ENCODE measurements at regions of chr2 and their contacts with region 1.

Region 1: DNA sequence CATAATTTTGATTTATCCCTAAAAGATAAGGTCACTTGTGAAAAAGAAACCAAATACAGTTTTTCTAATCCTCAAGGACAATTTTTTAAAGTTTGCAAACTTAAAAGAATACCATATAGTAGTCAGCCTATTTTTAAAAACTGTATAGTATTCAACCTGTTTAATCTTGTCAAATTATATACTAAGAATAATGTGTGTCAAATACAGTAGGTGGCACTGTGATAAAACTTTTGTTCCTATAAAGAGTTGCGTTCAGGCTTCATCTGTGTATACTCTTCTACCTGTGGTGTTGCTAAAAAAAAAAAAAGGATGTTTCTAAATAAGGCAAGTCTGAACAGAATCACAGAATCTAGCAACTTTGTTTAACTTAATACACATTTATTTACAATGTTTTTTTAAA is 68.6 kb downstream of the CCDC138 start:
- DNase-seq: peak; percentile 56
- ATAC-seq: peak; percentile 88
- H3K4me3 ChIP-seq: no peak overlapping the region
- H3K27ac ChIP-seq: no peak overlapping the region
- H3K4me1 ChIP-seq: no peaks in the 10 kb centered on the region
- H3K27me3 ChIP-seq: no peaks in the 10 kb centered on the region
- CTCF ChIP-seq: peak; percentile 71

Region 2: GRCh38 chr2:108884619-108885018 is 29.4 kb after region 1 on chr2:
- CTCF ChIA-PET with region 1: interaction called, 10 read pairs
- POLR2A ChIA-PET with region 1: no interaction called
- intact Hi-C with region 1: no loop called
- DNase-seq: no peak
- ATAC-seq: no peak
- H3K4me3 ChIP-seq: no peak overlapping the region
- H3K27ac ChIP-seq: no peak overlapping the region
- H3K4me1 ChIP-seq: no peaks in the 10 kb centered on the region
- H3K27me3 ChIP-seq: no peaks in the 10 kb centered on the region
- CTCF ChIP-seq: no peak

Region 3: DNA sequence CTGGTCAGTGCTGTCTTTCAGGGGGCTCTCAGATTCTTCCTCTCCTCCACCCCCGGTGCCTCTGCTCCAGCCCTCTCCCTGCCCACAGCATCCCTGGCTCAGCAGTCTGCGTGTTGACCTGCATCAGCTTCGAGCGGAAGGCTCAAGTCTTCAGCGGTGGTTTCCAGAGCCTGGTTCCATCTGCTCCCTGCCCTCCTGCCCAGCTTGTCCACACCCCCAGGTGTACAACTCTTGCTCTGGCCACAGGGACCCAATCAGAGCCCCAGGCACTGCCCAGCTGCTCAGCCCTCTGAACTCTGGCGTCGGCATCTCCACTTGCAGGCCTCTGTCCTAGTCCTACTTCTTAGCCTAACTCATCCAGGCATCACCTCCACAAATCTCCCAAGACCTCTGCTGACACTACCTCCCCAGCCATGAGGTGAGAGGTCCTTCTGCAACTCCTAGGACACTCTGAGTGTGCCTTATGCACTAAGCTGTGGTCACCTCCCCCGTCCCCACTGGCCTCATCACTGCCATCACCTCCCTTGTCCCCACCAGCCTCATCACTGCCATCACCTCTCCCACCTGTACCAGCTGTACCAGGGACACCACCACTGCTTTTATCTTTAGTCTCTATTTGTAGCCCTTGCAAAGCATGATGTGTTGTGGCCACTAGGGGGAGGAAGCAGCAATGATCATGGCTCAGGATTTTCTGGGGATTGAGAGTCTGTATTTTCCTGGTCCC is 72.9 kb after region 1 on chr2:
- CTCF ChIA-PET with region 1: interaction called, 6 read pairs
- POLR2A ChIA-PET with region 1: no interaction called
- intact Hi-C with region 1: loop called (anchors 10 kb)
- DNase-seq: peak; percentile 72
- ATAC-seq: peak; percentile 87
- H3K4me3 ChIP-seq: no peak overlapping the region
- H3K27ac ChIP-seq: no peak overlapping the region
- H3K4me1 ChIP-seq: peaks cover 9% of the 10 kb centered on the region
- H3K27me3 ChIP-seq: no peaks in the 10 kb centered on the region
- CTCF ChIP-seq: peak; percentile 94

Region 4: GRCh38 chr2:108988796-108989713 is 133.9 kb after region 1 on chr2 and contains the start of gene EDAR:
- CTCF ChIA-PET with region 1: no interaction called
- POLR2A ChIA-PET with region 1: no interaction called
- intact Hi-C with region 1: loop called (anchors 1 kb)
- DNase-seq: peak; percentile 77
- ATAC-seq: peak; percentile 98
- H3K4me3 ChIP-seq: peak within 1 kb of the TSS; percentile 20; the same call in 1 of the 2 replicates
- H3K27ac ChIP-seq: no peak within 1 kb of the TSS
- H3K4me1 ChIP-seq: no peaks in the 10 kb centered on the region; the same call in 1 of the 2 replicates
- H3K27me3 ChIP-seq: no peaks in the 10 kb centered on the region
- CTCF ChIP-seq: peak; percentile 89
- total RNA-seq, gene EDAR: 0.04 TPM in 1 of 2 replicates, not detected in the other

Region 5: DNA sequence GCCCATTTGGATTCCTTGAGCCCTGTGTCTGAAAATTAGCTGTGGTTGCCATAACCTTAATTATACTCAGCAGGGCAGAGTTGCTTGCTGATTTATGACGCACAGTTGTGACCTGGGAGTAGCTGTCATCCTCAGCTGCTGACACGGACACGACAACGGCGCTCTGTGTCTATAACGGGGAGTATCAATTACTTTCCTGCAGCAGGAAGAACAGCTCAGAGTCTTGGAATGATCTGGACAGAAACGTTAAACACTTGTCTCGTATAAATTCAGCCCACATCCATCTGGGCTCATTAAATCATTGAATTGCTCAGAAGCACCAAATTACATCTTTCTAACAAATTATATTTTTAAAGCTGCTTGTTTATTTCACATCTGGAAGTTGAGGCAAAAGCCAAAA is 642.3 kb after region 1 on chr2:
- CTCF ChIA-PET with region 1: no interaction called
- POLR2A ChIA-PET with region 1: no interaction called
- intact Hi-C with region 1: loop called (anchors 10 kb)
- DNase-seq: peak; percentile 78
- ATAC-seq: peak; percentile 90
- H3K4me3 ChIP-seq: no peak overlapping the region
- H3K27ac ChIP-seq: peak overlapping the region; percentile 61
- H3K4me1 ChIP-seq: peaks cover 34% of the 10 kb centered on the region
- H3K27me3 ChIP-seq: no peaks in the 10 kb centered on the region
- CTCF ChIP-seq: no peak

Measured in PC-3 (cell line).